ENCODE measurements at regions of chr20 and their contacts with region 1.

Region 1: DNA sequence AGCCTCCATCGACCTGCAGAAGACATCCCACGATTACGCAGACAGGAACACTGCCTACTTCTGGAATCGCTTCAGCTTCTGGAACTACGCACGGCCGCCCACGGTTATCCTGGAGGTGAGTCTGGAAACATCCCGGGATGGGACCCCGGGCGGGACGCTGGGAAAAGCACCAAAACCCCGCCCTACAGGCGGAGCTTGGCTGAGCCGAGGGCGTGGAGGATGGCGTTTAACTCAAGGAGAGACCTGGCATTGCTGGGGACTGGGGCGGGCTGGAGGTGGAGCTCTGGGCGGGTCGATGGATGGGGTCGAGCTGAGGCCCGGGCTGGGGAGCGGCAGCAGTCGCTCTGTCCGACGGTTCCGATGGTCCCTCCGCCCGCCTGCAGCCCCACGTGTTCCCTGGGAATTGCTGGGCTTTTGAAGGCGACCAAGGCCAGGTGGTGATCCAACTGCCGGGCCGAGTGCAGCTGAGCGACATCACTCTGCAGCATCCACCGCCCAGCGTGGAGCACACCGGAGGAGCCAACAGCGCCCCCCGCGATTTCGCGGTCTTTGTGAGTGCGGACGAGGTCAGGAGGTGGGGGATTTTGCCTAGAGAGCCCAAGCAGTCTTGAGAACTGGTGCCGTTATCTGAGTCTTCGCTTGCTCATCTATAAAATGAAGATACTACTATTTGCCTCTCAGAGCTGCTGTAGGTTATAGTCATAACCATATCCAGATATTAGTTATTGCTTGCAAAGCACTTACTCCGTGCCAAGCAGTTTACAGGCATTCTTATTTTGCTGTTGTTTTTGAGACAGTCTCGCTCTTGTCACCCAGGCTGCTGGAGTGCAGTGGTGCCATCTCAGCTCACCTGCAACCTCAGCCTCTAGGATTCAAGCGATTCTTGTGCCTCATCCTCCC is 3.8 kb downstream of the SPAG4 start:
- DNase-seq: peak; percentile 75
- H3K4me3 Mint-ChIP-seq: peak overlapping the region; percentile 88
- H3K27ac Mint-ChIP-seq: peak overlapping the region; percentile 89
- H3K4me1 Mint-ChIP-seq: peaks cover 27% of the 10 kb centered on the region
- H3K27me3 Mint-ChIP-seq: no peaks in the 10 kb centered on the region

Region 2: GRCh38 chr20:35284267-35284991 is 335.0 kb before region 1 on chr20 and contains the start of gene EIF6:
- intact Hi-C with region 1: loop called (anchors 1 kb)
- DNase-seq: peak; percentile 73
- H3K4me3 Mint-ChIP-seq: peak within 1 kb of the TSS; percentile 93
- H3K27ac Mint-ChIP-seq: peak within 1 kb of the TSS; percentile 95
- H3K4me1 Mint-ChIP-seq: peaks cover 28% of the 10 kb centered on the region
- H3K27me3 Mint-ChIP-seq: peaks cover 2% of the 10 kb centered on the region
- total RNA-seq, gene EIF6: 232 TPM in 2 replicates

Region 3: GRCh38 chr20:35410613-35411012 is 208.8 kb before region 1 on chr20:
- intact Hi-C with region 1: loop called (anchors 1 kb)
- DNase-seq: no peak
- H3K4me3 Mint-ChIP-seq: peak overlapping the region; percentile 87
- H3K27ac Mint-ChIP-seq: peak overlapping the region; percentile 19
- H3K4me1 Mint-ChIP-seq: peaks cover 6% of the 10 kb centered on the region
- H3K27me3 Mint-ChIP-seq: no peaks in the 10 kb centered on the region

Region 4: DNA sequence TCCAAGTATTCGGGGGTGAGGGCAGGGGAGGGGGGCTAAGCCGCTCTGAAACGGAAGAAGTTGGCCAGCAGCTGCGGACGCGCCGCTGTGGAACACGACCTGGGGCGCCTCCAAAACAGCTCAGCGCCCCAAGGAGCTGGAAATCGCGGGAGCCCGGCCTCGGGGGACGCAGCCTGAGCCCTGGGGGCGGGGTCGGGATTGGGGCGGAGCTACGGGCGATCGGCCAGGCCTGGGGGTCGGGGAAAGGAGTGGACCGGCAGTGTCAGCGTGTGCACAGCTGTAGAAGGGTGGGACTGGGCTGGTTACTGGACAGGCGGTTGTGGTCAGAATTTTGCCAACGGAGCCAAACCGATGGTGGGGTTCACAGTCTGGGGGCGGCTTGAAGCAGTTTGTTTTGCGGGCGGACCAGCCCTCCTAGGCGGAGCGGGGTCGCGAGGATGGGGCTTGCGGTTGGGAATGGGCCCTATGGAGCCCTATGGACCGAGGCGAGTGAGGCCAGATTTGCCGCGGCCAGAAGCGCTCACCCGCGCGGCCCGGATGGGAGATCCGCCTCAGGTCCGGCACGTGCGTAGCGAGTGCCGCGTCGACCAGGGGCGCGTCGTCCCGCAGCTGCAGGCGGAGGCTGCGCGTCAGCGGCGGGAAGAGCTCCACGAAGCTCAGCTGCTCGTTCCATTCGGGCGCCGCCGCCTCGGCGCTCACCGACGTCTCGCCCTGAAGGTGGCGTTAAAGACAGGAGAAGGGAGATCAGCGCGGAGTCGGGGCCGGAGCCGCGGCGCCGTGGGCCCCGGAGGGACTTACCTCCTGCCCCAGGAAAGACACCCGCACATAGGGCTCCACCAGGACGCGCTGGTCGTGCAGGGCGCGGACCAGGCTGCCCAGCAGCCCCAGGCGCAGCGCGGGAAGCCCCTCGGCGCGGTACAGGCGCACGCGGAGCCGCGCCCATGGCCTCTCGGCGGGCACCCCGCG is 18.2 kb before region 1 on chr20:
- intact Hi-C with region 1: loop called (anchors 1 kb)
- DNase-seq: peak; percentile 70
- H3K4me3 Mint-ChIP-seq: peak overlapping the region; percentile 72
- H3K27ac Mint-ChIP-seq: peak overlapping the region; percentile 31
- H3K4me1 Mint-ChIP-seq: no peaks in the 10 kb centered on the region
- H3K27me3 Mint-ChIP-seq: peaks cover 32% of the 10 kb centered on the region

Region 5: DNA sequence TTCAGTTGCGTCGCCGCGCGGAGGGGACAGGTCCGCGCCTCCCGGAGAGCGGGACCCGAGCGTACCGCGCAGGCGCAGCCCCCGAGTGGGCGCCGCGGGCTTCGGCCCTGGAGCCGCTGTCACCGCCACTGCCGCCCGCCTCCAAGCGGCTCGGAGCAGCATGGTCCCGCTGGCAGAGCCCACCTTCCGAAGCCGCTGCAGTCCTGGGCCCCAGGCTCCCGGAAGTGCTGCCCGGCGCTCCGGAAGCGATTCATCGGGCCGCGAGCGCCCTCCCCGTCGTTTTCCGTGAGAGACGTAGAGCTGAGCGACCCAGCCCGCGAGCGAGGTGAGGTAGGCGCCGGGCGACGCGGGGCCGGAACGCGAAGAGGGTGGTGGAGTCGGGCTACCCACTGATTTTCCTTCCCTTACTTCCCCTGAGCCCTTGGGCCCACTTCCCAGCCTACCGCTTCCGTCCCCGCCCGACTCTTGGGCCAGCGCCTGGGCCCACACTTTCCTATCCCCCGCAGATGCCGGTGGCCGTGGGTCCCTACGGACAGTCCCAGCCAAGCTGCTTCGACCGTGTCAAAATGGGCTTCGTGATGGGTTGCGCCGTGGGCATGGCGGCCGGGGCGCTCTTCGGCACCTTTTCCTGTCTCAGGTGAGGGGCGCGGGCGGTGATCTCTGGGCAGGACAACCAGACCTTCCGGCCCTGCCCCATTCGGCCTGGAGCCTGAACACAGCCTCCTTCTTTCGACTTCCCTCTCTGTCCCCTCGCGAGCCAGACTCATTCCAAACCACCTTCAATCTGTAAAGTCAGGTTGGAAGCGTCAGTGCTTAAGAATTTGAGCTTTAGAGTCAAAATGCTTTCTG is 79.9 kb after region 1 on chr20 and contains the starts of genes NFS1 and ROMO1:
- intact Hi-C with region 1: loop called (anchors 1 kb)
- DNase-seq: peak; percentile 80
- H3K4me3 Mint-ChIP-seq: peak within 1 kb of the TSS; percentile 92
- H3K27ac Mint-ChIP-seq: peak within 1 kb of the TSS; percentile 94
- H3K4me1 Mint-ChIP-seq: peaks cover 38% of the 10 kb centered on the region
- H3K27me3 Mint-ChIP-seq: no peaks in the 10 kb centered on the region
- total RNA-seq, gene NFS1: 35.7 and 36.2 TPM in 2 replicates
- total RNA-seq, gene ROMO1: 80.3 and 95.6 TPM in 2 replicates

Region 6: GRCh38 chr20:35726759-35727711 is 107.6 kb after region 1 on chr20:
- intact Hi-C with region 1: no loop called
- DNase-seq: no peak
- H3K4me3 Mint-ChIP-seq: no peak overlapping the region
- H3K27ac Mint-ChIP-seq: no peak overlapping the region
- H3K4me1 Mint-ChIP-seq: peaks cover 18% of the 10 kb centered on the region
- H3K27me3 Mint-ChIP-seq: no peaks in the 10 kb centered on the region

Region 7: GRCh38 chr20:35771689-35772562 is 152.5 kb after region 1 on chr20 and contains the start of gene PHF20:
- intact Hi-C with region 1: loop called (anchors 2 kb)
- DNase-seq: peak; percentile 98
- H3K4me3 Mint-ChIP-seq: peak within 1 kb of the TSS; percentile 94
- H3K27ac Mint-ChIP-seq: peak within 1 kb of the TSS; percentile 95
- H3K4me1 Mint-ChIP-seq: peaks cover 60% of the 10 kb centered on the region
- H3K27me3 Mint-ChIP-seq: no peaks in the 10 kb centered on the region
- total RNA-seq, gene PHF20: 50.5 and 61.9 TPM in 2 replicates

Measured in activated T-helper 1 cell treated with anti-CD3 and anti-CD28 coated beads, Interleukin-12 subunit alpha, Interleukin-12 subunit beta, Interleukin-2, Interleukin-4 antibody, amounts not matched to agents 30 ng/mL and 10 ng/mL and 1 ng/mL, durations not matched to agents 14 hours and 24 hours and 36 hours (primary cell).